Caco-2 (cell line): ENCODE measurements at regions of chr3 and their contacts with region 1.

Region 1: DNA sequence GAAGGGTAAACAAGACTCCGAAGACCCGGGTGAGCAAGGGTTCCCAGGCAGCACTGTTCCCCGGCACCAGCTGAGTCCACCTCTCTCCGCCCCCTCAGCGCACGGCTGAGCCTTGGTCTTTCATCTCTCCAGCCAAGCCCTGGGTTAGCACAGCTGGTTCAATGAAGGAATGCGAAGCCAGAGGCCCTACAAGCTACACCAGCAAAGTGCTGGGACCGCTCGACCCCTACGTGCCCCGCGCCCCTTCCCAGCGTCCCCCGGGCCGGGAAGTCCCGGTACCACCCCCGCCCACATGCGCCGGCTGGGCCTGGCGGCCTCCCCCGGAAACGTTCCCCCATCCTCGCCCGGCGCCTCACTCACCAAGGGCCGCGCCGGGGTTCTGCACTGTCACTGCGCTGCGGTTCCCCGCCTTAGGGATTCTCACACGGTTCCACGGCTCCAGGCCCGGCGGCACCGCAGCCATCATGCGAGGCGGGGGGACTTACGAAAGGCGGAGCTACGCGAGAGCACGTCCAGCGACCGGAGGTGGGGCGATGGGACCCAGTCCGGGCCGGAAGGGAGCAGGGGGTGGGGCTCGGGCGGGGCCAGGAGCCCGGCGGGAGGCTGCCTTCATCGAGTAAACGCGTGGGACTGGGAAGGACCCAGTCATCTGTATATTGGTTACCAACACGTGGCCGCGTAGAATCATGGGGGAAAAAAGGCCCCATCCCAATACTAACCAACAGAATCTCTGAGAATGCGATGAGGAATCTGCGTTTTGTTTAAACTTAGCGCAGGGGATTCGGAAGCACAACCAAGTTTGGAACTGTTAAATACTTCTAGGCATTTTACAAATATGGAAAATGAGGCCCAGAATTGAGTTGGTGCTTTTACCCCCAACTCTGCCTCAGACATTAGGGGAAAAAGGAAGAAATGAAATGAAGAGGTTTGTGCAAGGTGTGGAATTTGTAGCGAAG is 28.7 kb downstream of the GTPBP8 start:
- DNase-seq: peak; percentile 89 to 93
- H3K4me3 ChIP-seq: peak overlapping the region; percentile 94
- H3K4me3 Mint-ChIP-seq: peak overlapping the region; percentile 96
- H3K27ac Mint-ChIP-seq: peak overlapping the region; percentile 93
- H3K4me1 ChIP-seq: 0 out of 2 replicates have a peak, but pooled peaks cover 4% of the 10 kb centered on the region
- H3K4me1 Mint-ChIP-seq: peaks cover 7% of the 10 kb centered on the region
- H3K27me3 ChIP-seq: no peaks in the 10 kb centered on the region
- H3K27me3 Mint-ChIP-seq: no peaks in the 10 kb centered on the region
- CTCF ChIP-seq: no peak

Region 2: GRCh38 chr3:113005611-113006010 is 13.8 kb before region 1 on chr3:
- CTCF ChIA-PET with region 1: interaction called, 5 read pairs
- POLR2A ChIA-PET with region 1: interaction called, 13 read pairs
- intact Hi-C with region 1: no loop called
- DNase-seq: no peak
- H3K4me3 ChIP-seq: no peak overlapping the region
- H3K4me3 Mint-ChIP-seq: no peak overlapping the region
- H3K27ac Mint-ChIP-seq: no peak overlapping the region
- H3K4me1 ChIP-seq: no peaks in the 10 kb centered on the region
- H3K4me1 Mint-ChIP-seq: no peaks in the 10 kb centered on the region
- H3K27me3 ChIP-seq: no peaks in the 10 kb centered on the region
- H3K27me3 Mint-ChIP-seq: no peaks in the 10 kb centered on the region
- CTCF ChIP-seq: no peak